ENCODE measurements at regions of chr16 and their contacts with region 1.

Region 1: GRCh38 chr16:3879887-3880564 is 487 bp downstream of the CREBBP start:
- DNase-seq: peak; percentile 86
- H3K4me3 Mint-ChIP-seq: peak overlapping the region; percentile 88
- H3K27ac Mint-ChIP-seq: no peak overlapping the region
- H3K4me1 Mint-ChIP-seq: peaks cover 36% of the 10 kb centered on the region
- H3K27me3 Mint-ChIP-seq: no peaks in the 10 kb centered on the region
- CTCF ChIP-seq: no peak

Region 2: GRCh38 chr16:3690470-3690928 is 189.5 kb before region 1 on chr16:
- CTCF ChIA-PET with region 1: no interaction called
- intact Hi-C with region 1: loop called (anchors 5 kb)
- DNase-seq: peak; percentile 92
- H3K4me3 Mint-ChIP-seq: no peak overlapping the region
- H3K27ac Mint-ChIP-seq: no peak overlapping the region
- H3K4me1 Mint-ChIP-seq: peaks cover 19% of the 10 kb centered on the region
- H3K27me3 Mint-ChIP-seq: no peaks in the 10 kb centered on the region
- CTCF ChIP-seq: peak; percentile 94

Region 3: DNA sequence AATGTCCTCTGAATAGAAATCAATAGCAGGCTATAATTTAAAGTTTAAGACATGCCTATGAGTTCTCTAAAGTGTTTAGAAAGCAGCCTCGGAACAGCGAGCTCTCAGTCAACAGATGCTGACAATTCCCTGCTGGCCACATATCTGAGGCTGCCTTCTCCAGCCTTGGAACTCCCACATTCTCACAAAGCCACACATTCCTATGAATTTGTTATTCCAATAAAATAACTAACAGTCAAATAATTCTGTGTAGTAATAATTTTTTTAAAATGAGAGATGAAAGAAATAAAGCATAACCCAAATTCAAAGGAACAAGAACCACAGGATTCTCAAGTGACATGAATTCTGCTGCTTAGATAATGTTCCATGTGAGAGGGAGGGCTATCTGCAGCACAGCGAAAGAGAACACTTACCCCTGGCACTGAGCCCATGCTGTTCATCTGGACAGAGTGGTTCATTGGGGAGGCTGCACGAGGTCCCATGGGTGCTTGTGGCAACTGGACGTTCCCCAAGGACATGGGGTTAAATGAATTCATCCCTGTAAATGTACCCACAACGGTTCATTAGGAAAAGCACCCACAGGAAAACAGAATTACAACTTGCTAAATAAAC is 105.8 kb before region 1 on chr16:
- CTCF ChIA-PET with region 1: no interaction called
- intact Hi-C with region 1: loop called (anchors 10 kb)
- DNase-seq: no peak
- H3K4me3 Mint-ChIP-seq: no peak overlapping the region
- H3K27ac Mint-ChIP-seq: no peak overlapping the region
- H3K4me1 Mint-ChIP-seq: no peaks in the 10 kb centered on the region
- H3K27me3 Mint-ChIP-seq: no peaks in the 10 kb centered on the region
- CTCF ChIP-seq: no peak